Right cardiac atrium (tissue), 5 donors: ENCODE measurements at regions of chr17 and their contacts with region 1.

Region 1: DNA sequence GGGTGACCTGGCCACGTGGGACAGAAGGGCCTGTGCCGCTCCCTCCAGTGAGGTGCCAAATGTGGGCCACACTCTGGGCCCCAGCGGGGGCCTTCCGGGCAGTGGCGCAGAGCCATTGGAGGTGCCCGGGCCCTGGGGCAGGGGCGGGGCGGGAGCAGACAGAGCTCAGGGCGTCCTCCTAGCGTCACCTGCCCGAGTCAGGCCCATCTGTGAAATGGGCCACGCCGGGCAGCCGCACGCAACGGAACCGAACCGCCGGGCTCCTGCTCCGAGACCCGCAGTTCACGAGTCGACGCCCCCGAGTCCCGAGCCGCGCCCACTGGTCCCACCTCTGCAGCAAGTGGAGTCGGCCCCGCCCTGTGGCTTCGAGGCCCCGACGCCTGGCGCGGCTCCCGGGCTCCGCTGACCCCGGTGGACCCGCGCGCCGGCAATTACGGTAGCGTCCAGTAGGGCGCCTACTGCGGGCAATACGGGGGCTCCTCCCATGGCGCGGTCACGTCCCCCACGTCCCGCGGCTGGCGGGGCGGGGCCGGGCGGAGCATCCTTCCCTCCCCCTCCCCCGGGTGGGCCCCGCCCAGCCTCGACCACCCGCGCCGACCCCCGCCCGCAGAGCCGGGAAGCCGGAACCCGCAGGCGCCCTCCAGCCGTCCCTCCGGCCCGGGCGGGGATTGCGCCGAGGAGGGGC is 1.9 kb downstream of the SLC16A3 start:
- DNase-seq: peak; percentile 92 to 97 (median 97)
- ATAC-seq: peak; percentile 76 to 81
- H3K4me3 ChIP-seq: peak overlapping the region; percentile 69
- H3K27ac ChIP-seq: peak overlapping the region; percentile 91
- H3K4me1 ChIP-seq: peaks cover 4% of the 10 kb centered on the region
- H3K27me3 ChIP-seq: no peaks in the 10 kb centered on the region

Region 2: DNA sequence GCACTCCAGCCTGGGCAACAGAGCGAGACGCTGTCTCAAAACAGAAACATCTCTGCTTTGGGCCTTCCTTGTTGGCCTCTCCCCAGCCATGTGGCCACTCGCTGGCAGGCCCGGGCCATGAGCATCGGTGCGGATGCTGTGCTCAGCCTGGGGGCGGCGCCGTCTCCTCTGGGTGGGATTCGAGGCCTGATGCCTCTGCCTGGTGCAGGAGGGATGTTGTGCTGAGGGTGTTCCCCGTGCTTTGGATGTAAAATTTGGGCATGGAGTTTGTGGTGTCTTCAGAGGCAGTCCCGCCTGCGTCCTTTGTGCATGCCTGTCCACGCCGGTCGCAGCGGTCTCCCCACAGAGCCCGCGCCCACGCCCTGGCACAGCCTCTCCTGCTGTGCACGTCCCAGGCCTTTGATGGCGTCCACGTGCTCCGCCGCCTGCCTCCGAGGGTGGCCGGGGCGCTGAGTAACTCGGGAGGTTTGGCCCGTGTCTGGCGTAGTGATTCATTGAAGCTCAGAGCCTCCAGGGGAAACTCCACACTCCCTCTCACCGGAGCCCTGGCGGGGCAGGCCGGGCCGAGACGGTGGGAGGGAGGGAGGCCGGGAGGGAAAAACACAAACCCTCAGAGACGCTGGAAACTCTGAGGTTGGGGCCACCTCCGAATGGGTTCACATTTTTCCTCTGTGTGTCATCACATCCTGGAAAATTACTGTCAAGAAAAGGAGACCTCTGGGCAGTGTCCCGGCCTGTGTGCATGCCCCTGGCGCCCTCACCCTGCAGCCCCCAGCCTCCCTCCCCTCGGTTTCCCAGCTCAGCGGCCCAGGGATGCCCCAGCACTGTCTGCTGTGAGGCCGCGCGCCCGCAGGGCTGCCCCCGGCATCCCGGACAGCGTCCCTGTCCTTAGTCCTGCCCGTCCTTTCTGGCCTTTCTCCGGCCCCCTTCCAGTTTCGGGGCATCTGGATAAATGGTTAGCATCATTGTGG is 227.1 kb before region 1 on chr17:
- intact Hi-C with region 1: no loop called
- DNase-seq: peak; percentile 77 to 82 (median 79)
- ATAC-seq: peak; percentile 45 to 83
- H3K4me3 ChIP-seq: no peak overlapping the region
- H3K27ac ChIP-seq: no peak overlapping the region
- H3K4me1 ChIP-seq: no peaks in the 10 kb centered on the region
- H3K27me3 ChIP-seq: no peaks in the 10 kb centered on the region

Region 3: DNA sequence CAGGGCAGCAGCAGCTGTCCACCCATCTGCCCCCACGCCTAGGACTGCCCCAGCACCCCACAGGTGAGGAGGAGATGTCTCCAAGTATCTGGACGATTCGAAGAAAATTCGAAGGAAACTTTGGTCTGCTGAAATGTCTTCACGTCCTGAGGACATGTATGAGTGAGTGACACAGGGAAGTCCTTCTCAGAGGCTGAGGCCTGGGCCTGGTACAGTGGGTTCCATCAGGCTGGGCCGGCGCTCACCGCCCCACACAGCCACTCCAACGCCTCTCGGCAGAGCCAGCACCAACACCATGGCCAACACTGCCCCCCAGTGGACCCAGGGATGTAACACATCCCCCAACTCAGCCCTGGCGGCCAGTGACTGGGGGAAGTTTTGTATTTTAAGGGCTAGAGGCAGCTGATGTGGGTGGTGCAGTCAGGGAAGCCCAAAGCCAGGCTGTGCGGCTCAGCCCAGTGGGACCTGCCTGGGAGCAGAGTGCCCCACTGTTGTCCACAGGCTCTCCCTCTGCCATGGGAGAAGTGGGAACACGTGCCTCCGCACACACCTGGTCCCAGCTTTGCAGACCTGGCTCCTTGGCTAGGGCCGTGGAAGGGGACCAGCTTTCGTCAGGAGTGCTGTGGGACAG is 76.9 kb before region 1 on chr17:
- intact Hi-C with region 1: no loop called
- DNase-seq: peak; percentile 76 to 92 (median 90)
- ATAC-seq: peak; percentile 88 to 90
- H3K4me3 ChIP-seq: no peak overlapping the region
- H3K27ac ChIP-seq: no peak overlapping the region
- H3K4me1 ChIP-seq: no peaks in the 10 kb centered on the region
- H3K27me3 ChIP-seq: no peaks in the 10 kb centered on the region

Region 4: GRCh38 chr17:82292251-82293154 is 61.7 kb after region 1 on chr17:
- intact Hi-C with region 1: loop called in 1 of 4 experiments (anchors 10 kb)
- DNase-seq: peak; percentile 96 to 98 (median 98)
- ATAC-seq: peak; percentile 96 to 97
- H3K4me3 ChIP-seq: peak overlapping the region; percentile 91
- H3K27ac ChIP-seq: peak overlapping the region; percentile 94
- H3K4me1 ChIP-seq: peaks cover 4% of the 10 kb centered on the region
- H3K27me3 ChIP-seq: no peaks in the 10 kb centered on the region

Region 5: DNA sequence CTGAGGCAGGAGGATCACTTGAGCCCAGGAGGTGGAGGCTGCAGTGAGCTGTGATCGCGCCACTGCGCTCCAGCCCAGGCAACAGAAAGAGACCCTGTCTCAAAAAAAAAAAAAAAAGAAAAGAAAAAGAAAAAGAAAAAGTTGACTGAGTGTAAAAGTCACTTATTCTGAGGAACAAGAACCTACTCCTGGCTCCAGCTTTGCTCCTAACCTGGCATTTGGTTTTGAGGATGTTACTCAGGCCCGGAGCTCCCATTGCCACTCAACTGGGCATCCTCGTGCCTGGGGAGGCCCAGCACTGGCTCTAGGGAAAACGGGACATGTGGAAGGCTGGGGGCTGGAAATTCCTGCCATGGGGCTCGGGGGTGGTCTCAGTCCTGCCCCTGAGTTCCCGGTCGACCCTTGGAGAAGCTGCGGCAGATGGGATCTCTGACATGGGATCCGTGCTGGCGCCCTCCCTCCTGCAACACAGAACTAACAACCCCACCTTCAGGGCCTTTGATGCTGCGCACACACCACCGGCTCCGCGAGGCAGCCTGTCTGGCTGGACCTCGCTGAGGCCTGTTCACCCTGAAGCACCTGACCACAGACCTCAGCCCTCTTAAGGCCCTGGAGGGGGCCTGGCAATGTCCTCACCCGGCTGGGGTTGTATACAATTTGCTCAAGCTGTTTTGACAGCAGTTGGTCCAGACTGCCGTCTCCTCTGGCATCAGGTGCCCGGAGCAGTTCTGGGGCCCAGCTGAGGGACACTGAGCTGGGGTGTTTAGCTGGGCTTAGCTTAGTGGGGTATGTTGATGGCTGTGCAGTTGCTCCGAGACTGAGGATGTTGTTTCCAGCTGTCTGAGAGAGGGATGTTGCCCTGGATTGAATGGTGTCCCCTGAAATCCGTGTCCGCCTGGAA is 74.3 kb after region 1 on chr17:
- intact Hi-C with region 1: no loop called
- DNase-seq: peak; percentile 6 to 41 (median 41)
- ATAC-seq: no peak
- H3K4me3 ChIP-seq: no peak overlapping the region
- H3K27ac ChIP-seq: no peak overlapping the region
- H3K4me1 ChIP-seq: no peaks in the 10 kb centered on the region
- H3K27me3 ChIP-seq: no peaks in the 10 kb centered on the region